Natural killer cell (primary cell): ENCODE measurements at regions of chr1 and their contacts with region 1.

Region 1: GRCh38 chr1:28877132-28877781 is 37.1 kb upstream of the EPB41 start:
- DNase-seq: peak; percentile 71 to 89
- ATAC-seq: peak; percentile 81 to 88 (median 85)
- H3K4me3 ChIP-seq: no peak overlapping the region
- H3K4me3 Mint-ChIP-seq: no peak overlapping the region
- H3K27ac ChIP-seq: no peak overlapping the region
- H3K27ac Mint-ChIP-seq: no peak overlapping the region
- H3K4me1 ChIP-seq: peaks cover 6% of the 10 kb centered on the region
- H3K4me1 Mint-ChIP-seq: peaks cover 4 to 5% of the 10 kb centered on the region in 2 donors
- H3K27me3 ChIP-seq: no peaks in the 10 kb centered on the region
- H3K27me3 Mint-ChIP-seq: peaks cover 0 to 2% of the 10 kb centered on the region in 2 donors
- CTCF ChIP-seq: peak; percentile 89

Region 2: DNA sequence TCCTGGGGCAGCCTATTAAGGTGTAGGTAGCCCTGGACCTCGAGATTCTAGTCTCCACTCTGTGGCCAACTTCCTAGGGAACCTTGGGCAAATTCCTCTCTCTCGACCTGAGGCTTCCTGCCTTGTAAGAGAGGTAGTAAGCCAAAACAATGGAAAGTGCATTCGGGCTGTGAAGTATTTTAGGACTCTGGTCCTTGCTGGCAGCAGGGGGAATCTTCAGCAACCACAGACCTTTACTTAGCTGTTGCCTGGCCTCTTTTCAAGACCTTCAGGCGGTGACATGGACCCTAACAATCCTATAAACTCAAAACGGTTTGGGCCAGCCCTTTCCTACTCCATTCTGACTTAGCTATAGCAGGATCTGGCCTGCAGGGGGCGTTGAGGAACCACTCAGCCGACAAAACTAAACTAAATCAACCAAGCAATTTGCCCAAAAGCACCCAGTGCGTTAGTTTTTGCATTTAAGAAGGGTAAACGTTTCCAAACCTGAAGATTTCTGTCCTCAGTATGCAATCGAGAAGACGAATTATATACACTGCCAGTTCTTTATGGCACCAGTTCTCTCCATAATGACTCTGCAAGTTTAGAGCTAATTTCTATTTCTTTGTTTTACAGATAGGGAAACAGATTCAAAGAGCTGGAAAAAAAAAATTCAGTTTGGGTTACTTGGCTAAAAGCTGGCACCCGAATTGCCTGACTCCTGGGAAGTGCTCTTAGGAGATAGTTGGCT is 628.8 kb before region 1 on chr1:
- intact Hi-C with region 1: loop called (anchors 5 kb)
- DNase-seq: peak; percentile 79 to 92
- ATAC-seq: peak; percentile 18 to 41 (median 32)
- H3K4me3 ChIP-seq: no peak overlapping the region
- H3K4me3 Mint-ChIP-seq: peak overlapping the region; percentile 95
- H3K27ac ChIP-seq: peak overlapping the region; percentile 87
- H3K27ac Mint-ChIP-seq: peak overlapping the region; percentile 96 to 98
- H3K4me1 ChIP-seq: peaks cover 52% of the 10 kb centered on the region
- H3K4me1 Mint-ChIP-seq: peaks cover 48 to 56% of the 10 kb centered on the region in 2 donors
- H3K27me3 ChIP-seq: no peaks in the 10 kb centered on the region
- H3K27me3 Mint-ChIP-seq: no peaks in the 10 kb centered on the region
- CTCF ChIP-seq: peak; percentile 87

Region 3: GRCh38 chr1:28409090-28409489 is 468.2 kb before region 1 on chr1:
- intact Hi-C with region 1: loop called (anchors 2 kb)
- DNase-seq: no peak
- ATAC-seq: no peak
- H3K4me3 ChIP-seq: no peak overlapping the region
- H3K4me3 Mint-ChIP-seq: no peak overlapping the region
- H3K27ac ChIP-seq: no peak overlapping the region
- H3K27ac Mint-ChIP-seq: no peak overlapping the region
- H3K4me1 ChIP-seq: no peaks in the 10 kb centered on the region
- H3K4me1 Mint-ChIP-seq: peaks cover 6% of the 10 kb centered on the region in 2 donors
- H3K27me3 ChIP-seq: no peaks in the 10 kb centered on the region
- H3K27me3 Mint-ChIP-seq: no peaks in the 10 kb centered on the region
- CTCF ChIP-seq: no peak

Region 4: DNA sequence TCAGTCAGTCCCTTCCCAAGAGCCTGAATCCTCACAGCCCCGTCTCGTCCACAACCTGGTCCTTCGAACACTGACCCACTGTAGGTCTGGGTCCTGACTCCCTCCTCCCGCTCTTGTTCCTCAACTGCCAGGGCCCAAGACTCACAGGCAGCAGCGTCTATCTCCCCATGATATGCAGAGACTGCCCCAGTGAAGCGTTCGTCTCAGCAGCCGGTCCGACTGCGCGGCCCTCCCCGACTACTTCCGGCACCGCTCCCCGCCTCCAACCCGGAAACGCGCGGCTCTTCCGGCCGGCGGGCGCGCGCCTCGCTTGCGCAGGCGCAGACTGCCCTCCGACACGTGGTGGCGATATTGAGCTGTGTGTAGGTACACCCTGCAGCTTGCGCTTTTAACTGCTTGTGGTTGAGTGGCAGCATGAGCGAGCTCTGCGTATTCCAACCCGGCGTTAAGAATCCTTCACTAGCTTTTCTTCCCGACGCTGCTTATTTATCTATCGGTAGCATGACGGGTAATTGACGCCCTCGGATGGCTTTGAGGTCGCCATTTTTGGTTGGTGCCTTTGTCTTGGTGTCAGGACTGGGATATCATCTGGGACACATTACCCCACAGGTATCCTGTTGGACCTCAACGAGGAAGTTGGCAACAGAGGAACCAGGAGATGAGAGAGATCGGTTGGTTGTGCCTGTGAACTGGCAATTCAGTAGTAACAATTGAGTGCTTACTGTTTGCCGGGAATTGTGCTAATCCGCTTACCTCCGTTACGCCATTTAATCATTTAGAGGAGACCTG is 234.2 kb before region 1 on chr1 and contains the start of gene TAF12:
- intact Hi-C with region 1: loop called (anchors 5 kb)
- DNase-seq: peak; percentile 82 to 98
- ATAC-seq: peak; percentile 78 to 93 (median 85)
- H3K4me3 ChIP-seq: peak within 1 kb of the TSS; percentile 71
- H3K4me3 Mint-ChIP-seq: peak within 1 kb of the TSS; percentile 100
- H3K27ac ChIP-seq: peak within 1 kb of the TSS; percentile 98
- H3K27ac Mint-ChIP-seq: peak within 1 kb of the TSS; percentile 98 to 99
- H3K4me1 ChIP-seq: peaks cover 34% of the 10 kb centered on the region
- H3K4me1 Mint-ChIP-seq: peaks cover 36 to 46% of the 10 kb centered on the region in 2 donors
- H3K27me3 ChIP-seq: no peaks in the 10 kb centered on the region
- H3K27me3 Mint-ChIP-seq: no peaks in the 10 kb centered on the region
- CTCF ChIP-seq: peak; percentile 15
- total RNA-seq, gene TAF12: 17.9 to 23.8 (median 23.1) TPM

Region 5: GRCh38 chr1:28887419-28887834 is 10.2 kb after region 1 on chr1:
- intact Hi-C with region 1: no loop called
- DNase-seq: peak; percentile 72 to 81
- ATAC-seq: peak; percentile 43 to 72 (median 59)
- H3K4me3 ChIP-seq: peak overlapping the region; percentile 97
- H3K4me3 Mint-ChIP-seq: peak overlapping the region; percentile 95
- H3K27ac ChIP-seq: peak overlapping the region; percentile 84
- H3K27ac Mint-ChIP-seq: peak overlapping the region; percentile 89 to 93
- H3K4me1 ChIP-seq: peaks cover 37% of the 10 kb centered on the region
- H3K4me1 Mint-ChIP-seq: peaks cover 48 to 58% of the 10 kb centered on the region in 2 donors
- H3K27me3 ChIP-seq: no peaks in the 10 kb centered on the region
- H3K27me3 Mint-ChIP-seq: no peaks in the 10 kb centered on the region
- CTCF ChIP-seq: no peak